ENCODE measurements at regions of chr12 and their contacts with region 1.

Region 1: GRCh38 chr12:55847603-55848291 is 5.0 kb upstream of the MMP19 start:
- H3K4me3 Mint-ChIP-seq: peak overlapping the region; percentile 32
- H3K27ac Mint-ChIP-seq: peak overlapping the region; percentile 99
- H3K4me1 Mint-ChIP-seq: peaks cover 73% of the 10 kb centered on the region
- H3K27me3 Mint-ChIP-seq: no peaks in the 10 kb centered on the region

Region 2: GRCh38 chr12:55829967-55830600 is 17.7 kb before region 1 on chr12:
- intact Hi-C with region 1: loop called (anchors 1 kb)
- H3K4me3 Mint-ChIP-seq: peak overlapping the region; percentile 98
- H3K27ac Mint-ChIP-seq: peak overlapping the region; percentile 98
- H3K4me1 Mint-ChIP-seq: peaks cover 77% of the 10 kb centered on the region
- H3K27me3 Mint-ChIP-seq: no peaks in the 10 kb centered on the region